ENCODE measurements at regions of chr15 and their contacts with region 1.

Region 1: GRCh38 chr15:74127260-74127953 is 3.0 kb upstream of the ISLR2 start:
- DNase-seq: peak; percentile 86
- ATAC-seq: peak; percentile 83
- H3K4me3 ChIP-seq: peak overlapping the region in 3 of 5 experiments; percentile 30 to 50 (median 38)
- H3K4me3 Mint-ChIP-seq: peak overlapping the region; percentile 78
- H3K27ac ChIP-seq: no peak overlapping the region
- H3K27ac Mint-ChIP-seq: peak overlapping the region; percentile 41
- H3K4me1 ChIP-seq: peaks cover 66 to 67% of the 10 kb centered on the region in 2 donors
- H3K4me1 Mint-ChIP-seq: peaks cover 61% of the 10 kb centered on the region
- H3K27me3 ChIP-seq: peaks cover 0 to 59% (median 38%) of the 10 kb centered on the region in 4 experiments
- H3K27me3 Mint-ChIP-seq: peaks cover 47% of the 10 kb centered on the region
- CTCF ChIP-seq: peak; percentile 98

Region 2: DNA sequence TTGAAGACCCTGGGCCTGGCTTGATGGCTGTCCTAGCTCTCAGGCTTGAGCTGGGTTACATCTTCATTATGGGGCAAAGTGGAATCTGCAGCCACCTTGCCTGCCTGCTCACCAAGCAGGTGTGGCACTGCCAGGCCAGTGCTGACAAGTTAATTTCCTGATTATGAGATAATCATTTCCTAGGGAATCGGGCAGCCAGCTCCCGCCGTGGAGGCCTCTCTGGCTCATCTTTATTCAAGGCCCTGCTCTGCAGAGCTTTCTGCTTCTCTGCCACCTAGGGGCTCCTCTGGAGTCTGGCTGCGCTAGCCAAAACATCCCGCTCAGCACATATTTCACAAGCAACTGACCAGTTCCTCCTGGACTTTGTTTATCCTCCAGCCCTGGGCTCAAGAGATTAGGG is 191.2 kb before region 1 on chr15:
- CTCF ChIA-PET with region 1: no interaction called
- POLR2A ChIA-PET with region 1: no interaction called
- intact Hi-C with region 1: no loop called
- DNase-seq: no peak
- ATAC-seq: no peak
- H3K4me3 ChIP-seq: no peak overlapping the region
- H3K4me3 Mint-ChIP-seq: no peak overlapping the region
- H3K27ac ChIP-seq: no peak overlapping the region
- H3K27ac Mint-ChIP-seq: no peak overlapping the region
- H3K4me1 ChIP-seq: no peaks in the 10 kb centered on the region
- H3K4me1 Mint-ChIP-seq: no peaks in the 10 kb centered on the region
- H3K27me3 ChIP-seq: peaks cover 0 to 23% (median 0%) of the 10 kb centered on the region in 4 experiments
- H3K27me3 Mint-ChIP-seq: peaks cover 24% of the 10 kb centered on the region
- CTCF ChIP-seq: no peak

Region 3: DNA sequence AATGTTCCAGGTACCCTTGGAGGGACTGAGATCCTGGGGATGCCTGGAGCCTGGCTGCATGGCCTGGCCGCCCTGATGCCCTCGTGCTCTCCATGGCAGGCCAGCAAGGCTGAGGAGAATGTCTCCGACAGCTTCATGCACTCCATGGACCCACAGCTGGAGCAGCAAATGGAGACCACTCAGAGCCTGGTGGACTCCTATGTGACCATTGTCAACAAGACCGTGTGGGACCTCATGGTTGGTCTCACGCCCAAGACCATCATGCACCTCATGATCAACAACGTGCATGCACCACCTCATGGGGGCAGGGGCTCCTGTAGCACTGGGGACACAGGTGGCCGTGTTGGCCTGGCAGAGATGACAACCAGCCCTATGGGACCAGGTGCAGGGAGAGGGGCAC is 64.7 kb before region 1 on chr15:
- CTCF ChIA-PET with region 1: no interaction called
- POLR2A ChIA-PET with region 1: no interaction called
- intact Hi-C with region 1: no loop called
- DNase-seq: no peak
- ATAC-seq: no peak
- H3K4me3 ChIP-seq: no peak overlapping the region
- H3K4me3 Mint-ChIP-seq: no peak overlapping the region
- H3K27ac ChIP-seq: no peak overlapping the region
- H3K27ac Mint-ChIP-seq: no peak overlapping the region
- H3K4me1 ChIP-seq: no peaks in the 10 kb centered on the region
- H3K4me1 Mint-ChIP-seq: no peaks in the 10 kb centered on the region
- H3K27me3 ChIP-seq: no peaks in the 10 kb centered on the region
- H3K27me3 Mint-ChIP-seq: peaks cover 2% of the 10 kb centered on the region
- CTCF ChIP-seq: no peak

Region 4: DNA sequence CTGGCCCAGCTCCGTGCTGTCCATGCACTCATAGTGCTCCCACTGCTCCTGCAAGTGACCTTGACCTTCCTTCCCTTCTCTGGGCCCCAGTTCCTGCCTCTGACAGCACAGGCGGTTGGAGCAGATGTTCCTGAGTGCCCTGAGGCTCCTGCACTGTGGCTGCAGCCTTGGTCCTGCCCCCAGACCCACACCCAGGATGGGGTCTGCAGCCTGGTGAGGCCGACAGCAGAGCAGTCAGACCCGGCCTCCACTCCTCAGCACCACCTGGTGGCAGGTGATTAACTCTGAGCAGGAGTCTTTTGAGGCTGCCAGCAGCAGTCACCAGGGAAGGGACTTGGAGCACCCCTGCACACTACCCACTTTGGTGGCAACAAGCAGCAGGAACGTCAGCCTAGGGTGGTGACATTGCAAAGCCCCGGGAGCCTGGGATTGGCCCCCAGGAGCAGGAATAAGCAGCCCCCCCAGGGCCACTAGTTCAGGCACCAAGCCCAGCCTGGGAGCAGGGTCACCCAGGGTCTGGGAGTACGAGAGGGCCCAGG is 175.5 kb after region 1 on chr15:
- CTCF ChIA-PET with region 1: interaction called, 7 read pairs
- POLR2A ChIA-PET with region 1: no interaction called
- intact Hi-C with region 1: loop called (anchors 1 kb)
- DNase-seq: peak; percentile 52
- ATAC-seq: no peak
- H3K4me3 ChIP-seq: no peak overlapping the region
- H3K4me3 Mint-ChIP-seq: no peak overlapping the region
- H3K27ac ChIP-seq: no peak overlapping the region
- H3K27ac Mint-ChIP-seq: peak overlapping the region; percentile 53
- H3K4me1 ChIP-seq: no peaks in the 10 kb centered on the region
- H3K4me1 Mint-ChIP-seq: no peaks in the 10 kb centered on the region
- H3K27me3 ChIP-seq: peaks cover 0 to 39% (median 7%) of the 10 kb centered on the region in 4 experiments
- H3K27me3 Mint-ChIP-seq: peaks cover 77% of the 10 kb centered on the region
- CTCF ChIP-seq: peak; percentile 45

Region 5: DNA sequence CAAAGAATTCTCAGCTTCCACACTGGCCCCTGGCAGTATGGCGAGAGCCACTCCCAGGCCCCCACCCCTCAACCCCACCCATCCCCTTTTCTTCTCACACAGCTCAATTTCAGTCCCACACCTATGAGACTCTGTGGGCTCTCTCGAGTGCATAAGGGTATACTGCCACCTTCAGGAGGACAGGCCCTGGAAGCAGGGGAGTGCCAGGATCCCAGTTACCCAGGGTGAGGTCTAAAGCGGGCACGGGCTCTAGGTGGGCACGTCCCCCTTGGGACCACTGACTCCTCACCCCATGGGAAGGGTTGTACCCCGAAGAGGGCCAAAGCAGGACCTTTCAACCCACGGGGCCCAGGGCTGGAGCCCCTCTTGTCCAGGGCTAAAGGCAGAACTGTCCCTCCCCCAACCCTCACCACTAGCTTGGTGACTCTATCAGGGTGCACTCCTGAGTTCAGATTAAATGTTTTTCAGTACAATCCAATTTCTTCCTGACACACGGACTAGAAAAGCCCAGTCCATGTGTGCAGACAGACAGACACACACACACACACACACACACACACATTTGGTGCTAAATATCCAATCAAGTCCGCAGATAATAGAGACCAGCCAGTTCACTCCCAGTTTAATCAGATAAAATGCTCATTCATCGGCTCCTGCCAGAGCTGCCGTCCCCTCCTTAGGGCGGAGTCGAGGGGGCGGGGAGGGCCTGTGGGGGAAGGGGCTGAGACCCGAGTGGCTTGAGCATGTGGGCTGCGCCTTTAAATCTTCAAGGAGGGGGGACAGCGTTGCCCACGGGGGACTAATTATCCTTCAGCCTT is 180.6 kb after region 1 on chr15:
- CTCF ChIA-PET with region 1: interaction called, 7 read pairs
- POLR2A ChIA-PET with region 1: no interaction called
- intact Hi-C with region 1: loop called (anchors 1 kb)
- DNase-seq: peak; percentile 49
- ATAC-seq: peak; percentile 47
- H3K4me3 ChIP-seq: no peak overlapping the region
- H3K4me3 Mint-ChIP-seq: no peak overlapping the region
- H3K27ac ChIP-seq: no peak overlapping the region
- H3K27ac Mint-ChIP-seq: no peak overlapping the region
- H3K4me1 ChIP-seq: no peaks in the 10 kb centered on the region
- H3K4me1 Mint-ChIP-seq: no peaks in the 10 kb centered on the region
- H3K27me3 ChIP-seq: peaks cover 0 to 25% (median 5%) of the 10 kb centered on the region in 4 experiments
- H3K27me3 Mint-ChIP-seq: peaks cover 54% of the 10 kb centered on the region
- CTCF ChIP-seq: peak; percentile 48

Region 6: GRCh38 chr15:74322181-74323076 is 195.0 kb after region 1 on chr15:
- CTCF ChIA-PET with region 1: interaction called, 6 read pairs
- POLR2A ChIA-PET with region 1: no interaction called
- intact Hi-C with region 1: loop called (anchors 1 kb)
- DNase-seq: peak; percentile 68
- ATAC-seq: peak; percentile 73
- H3K4me3 ChIP-seq: no peak overlapping the region
- H3K4me3 Mint-ChIP-seq: no peak overlapping the region
- H3K27ac ChIP-seq: no peak overlapping the region
- H3K27ac Mint-ChIP-seq: no peak overlapping the region
- H3K4me1 ChIP-seq: peaks cover 0 to 19% of the 10 kb centered on the region in 2 donors
- H3K4me1 Mint-ChIP-seq: peaks cover 2% of the 10 kb centered on the region
- H3K27me3 ChIP-seq: peaks cover 0 to 10% (median 0%) of the 10 kb centered on the region in 4 experiments
- H3K27me3 Mint-ChIP-seq: peaks cover 21% of the 10 kb centered on the region
- CTCF ChIP-seq: peak; percentile 73

Measured in B cell (primary cell).